Dorsolateral prefrontal cortex (tissue), 120 donors: ENCODE measurements at regions of chr1 and their contacts with region 1.

Region 1: GRCh38 chr1:228734881-228735801 is at the start of gene RHOU:
- DNase-seq: peak; percentile 47 to 90 (median 74)
- H3K4me3 ChIP-seq: peak within 1 kb of the TSS; percentile 55 to 98 (median 85)
- H3K27ac ChIP-seq: peak within 1 kb of the TSS; percentile 77 to 99 (median 95)
- H3K27me3 ChIP-seq: no peaks in the 10 kb centered on the region
- CTCF ChIP-seq: peak in 55 of 56 donors; percentile 1 to 99 (median 84)
- total RNA-seq, gene RHOU: 15.0 to 156 (median 44.0) TPM

Region 2: GRCh38 chr1:228721402-228721801 is 13.7 kb before region 1 on chr1:
- intact Hi-C with region 1: no loop called
- DNase-seq: no peak
- H3K4me3 ChIP-seq: no peak overlapping the region
- H3K27ac ChIP-seq: no peak overlapping the region
- H3K27me3 ChIP-seq: no peaks in the 10 kb centered on the region
- CTCF ChIP-seq: no peak

Region 3: DNA sequence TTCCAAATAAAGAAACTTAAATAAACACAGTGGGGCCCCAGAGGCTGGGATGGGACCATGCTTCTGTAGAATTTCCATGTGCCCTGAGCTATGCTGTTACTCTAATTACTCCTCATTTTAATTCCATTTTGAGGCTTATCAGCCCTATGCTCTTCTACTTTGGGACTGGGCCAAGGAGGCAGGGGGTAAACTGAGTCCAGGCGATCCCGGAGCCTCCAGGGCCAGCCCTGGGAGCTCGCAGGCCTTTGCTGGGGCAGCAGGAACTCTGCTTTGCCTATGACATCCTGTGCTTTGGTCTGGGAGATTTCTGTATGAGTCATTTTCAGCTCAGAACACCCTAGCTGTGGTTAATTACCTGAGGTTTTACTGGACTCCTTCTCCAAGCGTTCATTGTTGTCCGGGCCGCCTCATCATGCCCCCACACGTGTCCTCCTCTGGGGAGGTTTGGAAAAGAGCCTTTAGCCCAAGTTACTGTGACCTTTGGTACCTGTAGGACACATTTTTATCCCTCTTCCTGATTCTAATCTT is 95.9 kb after region 1 on chr1:
- intact Hi-C with region 1: loop called (anchors 5 kb)
- DNase-seq: no peak
- H3K4me3 ChIP-seq: no peak overlapping the region
- H3K27ac ChIP-seq: peak overlapping the region in 7 of 59 donors; percentile 15 to 60 (median 45)
- H3K27me3 ChIP-seq: peaks cover 0 to 7% (median 0%) of the 10 kb centered on the region in 45 donors
- CTCF ChIP-seq: no peak

Region 4: GRCh38 chr1:228902781-228903433 is 167.8 kb after region 1 on chr1:
- intact Hi-C with region 1: loop called in 1 of 2 experiments (anchors 2 kb)
- DNase-seq: peak; percentile 10 to 90 (median 76)
- H3K4me3 ChIP-seq: peak overlapping the region in 14 of 59 donors; percentile 4 to 31 (median 15)
- H3K27ac ChIP-seq: peak overlapping the region in 57 of 59 donors; percentile 12 to 93 (median 81)
- H3K27me3 ChIP-seq: no peaks in the 10 kb centered on the region
- CTCF ChIP-seq: peak in 7 of 56 donors; percentile 6 to 24 (median 13)

Region 5: GRCh38 chr1:229003233-229004031 is 268.3 kb after region 1 on chr1:
- intact Hi-C with region 1: loop called (anchors 1 to 2 kb)
- DNase-seq: peak; percentile 67 to 97 (median 88)
- H3K4me3 ChIP-seq: no peak overlapping the region
- H3K27ac ChIP-seq: peak overlapping the region; percentile 44 to 97 (median 90)
- H3K27me3 ChIP-seq: no peaks in the 10 kb centered on the region
- CTCF ChIP-seq: peak in 15 of 56 donors; percentile 5 to 42 (median 24)

Region 6: GRCh38 chr1:229258031-229258756 is 523.1 kb after region 1 on chr1:
- intact Hi-C with region 1: loop called (anchors 10 kb)
- DNase-seq: peak in 8 of 10 donors; percentile 55 to 80 (median 70)
- H3K4me3 ChIP-seq: peak overlapping the region in 3 of 59 donors; percentile 11 to 21 (median 13)
- H3K27ac ChIP-seq: peak overlapping the region in 55 of 59 donors; percentile 6 to 89 (median 72)
- H3K27me3 ChIP-seq: no peaks in the 10 kb centered on the region
- CTCF ChIP-seq: peak; percentile 69 to 99 (median 93)